Mammary epithelial cell (primary cell): ENCODE measurements at regions of chr20 and their contacts with region 1.

Region 1: GRCh38 chr20:10109641-10110040 is 74.9 kb downstream of the ANKEF1 start:
- DNase-seq: no peak
- H3K4me3 ChIP-seq: no peak overlapping the region
- H3K27ac ChIP-seq: no peak overlapping the region
- H3K4me1 ChIP-seq: peaks cover 24% of the 10 kb centered on the region
- H3K27me3 ChIP-seq: no peaks in the 10 kb centered on the region
- CTCF ChIP-seq: no peak

Region 2: DNA sequence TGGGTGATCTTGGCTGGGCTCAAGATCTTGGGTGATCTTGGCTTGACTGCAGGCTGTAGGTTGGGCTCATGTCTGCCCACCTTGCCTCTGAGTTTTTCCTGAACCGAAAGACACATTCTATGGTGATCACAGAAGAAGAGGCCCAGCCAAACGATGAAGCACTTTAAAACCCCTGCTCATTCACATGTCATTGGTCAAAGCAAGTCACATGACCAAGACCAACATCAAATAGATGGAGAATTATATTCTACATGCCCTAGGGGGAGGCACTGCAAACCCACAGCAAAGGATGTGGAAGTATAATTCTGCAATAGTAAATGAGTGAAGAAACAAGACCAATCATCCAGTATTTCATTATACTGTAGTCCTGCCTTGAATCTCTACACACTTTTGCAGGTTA is 33.0 kb after region 1 on chr20:
- CTCF ChIA-PET with region 1: no interaction called
- dilution Hi-C with region 1: no loop called
- in situ Hi-C with region 1: no loop called
- intact Hi-C with region 1: no loop called
- DNase-seq: no peak
- H3K4me3 ChIP-seq: no peak overlapping the region
- H3K27ac ChIP-seq: no peak overlapping the region
- H3K4me1 ChIP-seq: no peaks in the 10 kb centered on the region
- H3K27me3 ChIP-seq: peaks cover 3% of the 10 kb centered on the region
- CTCF ChIP-seq: no peak

Region 3: DNA sequence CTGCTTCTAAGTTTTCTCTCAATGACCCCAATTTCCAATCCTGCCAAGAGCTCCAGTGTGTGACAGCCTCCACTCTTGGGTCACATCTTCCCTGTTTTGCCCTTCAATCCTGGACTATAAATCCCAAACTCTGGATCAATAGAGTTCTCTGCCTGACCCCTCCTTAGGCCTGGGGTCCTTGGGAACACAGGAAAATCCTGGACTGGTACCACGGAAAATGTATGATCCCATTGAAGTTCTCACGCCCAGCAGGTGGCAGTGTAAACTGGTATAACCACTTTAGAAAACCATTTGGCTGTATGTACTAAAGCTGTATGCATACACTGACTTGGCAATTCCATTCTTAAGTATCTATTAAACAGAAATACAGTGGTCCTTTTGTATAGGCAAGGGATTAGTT is 206.9 kb after region 1 on chr20:
- CTCF ChIA-PET with region 1: no interaction called
- dilution Hi-C with region 1: no loop called
- in situ Hi-C with region 1: no loop called
- intact Hi-C with region 1: no loop called
- DNase-seq: no peak
- H3K4me3 ChIP-seq: no peak overlapping the region
- H3K27ac ChIP-seq: no peak overlapping the region
- H3K4me1 ChIP-seq: peaks cover 7% of the 10 kb centered on the region
- H3K27me3 ChIP-seq: no peaks in the 10 kb centered on the region
- CTCF ChIP-seq: peak; percentile 22 to 31

Region 4: GRCh38 chr20:10357974-10358373 is 248.3 kb after region 1 on chr20:
- CTCF ChIA-PET with region 1: no interaction called
- dilution Hi-C with region 1: no loop called
- in situ Hi-C with region 1: loop called in 1 of 2 experiments (anchors 10 kb)
- intact Hi-C with region 1: no loop called
- DNase-seq: no peak
- H3K4me3 ChIP-seq: no peak overlapping the region
- H3K27ac ChIP-seq: no peak overlapping the region
- H3K4me1 ChIP-seq: no peaks in the 10 kb centered on the region
- H3K27me3 ChIP-seq: no peaks in the 10 kb centered on the region
- CTCF ChIP-seq: peak; percentile 50 to 67